ENCODE measurements at regions of chrX and their contacts with region 1.

Region 1: DNA sequence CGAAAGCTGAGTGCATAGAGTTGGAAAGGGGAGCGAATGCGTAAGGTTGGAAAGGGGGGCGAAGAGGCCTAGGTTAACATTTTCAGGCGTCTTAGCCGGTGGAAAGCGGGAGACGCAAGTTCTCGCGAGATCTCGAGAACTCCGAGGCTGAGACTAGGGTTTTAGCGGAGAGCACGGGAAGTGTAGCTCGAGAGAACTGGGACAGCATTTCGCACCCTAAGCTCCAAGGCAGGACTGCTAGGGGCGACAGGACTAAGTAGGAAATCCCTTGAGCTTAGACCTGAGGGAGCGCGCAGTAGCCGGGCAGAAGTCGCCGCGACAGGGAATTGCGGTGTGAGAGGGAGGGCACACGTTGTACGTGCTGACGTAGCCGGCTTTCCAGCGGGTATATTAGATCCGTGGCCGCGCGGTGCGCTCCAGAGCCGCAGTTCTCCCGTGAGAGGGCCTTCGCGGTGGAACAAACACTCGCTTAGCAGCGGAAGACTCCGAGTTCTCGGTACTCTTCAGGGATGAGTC is at the start of gene DDX3X:
- DNase-seq: peak; percentile 83 to 95 (median 94)
- H3K4me3 ChIP-seq: peak within 1 kb of the TSS; percentile 84 to 98
- H3K4me3 Mint-ChIP-seq: peak within 1 kb of the TSS; percentile 91 to 99 (median 98)
- H3K27ac ChIP-seq: peak within 1 kb of the TSS; percentile 98
- H3K27ac Mint-ChIP-seq: peak within 1 kb of the TSS; percentile 99 to 100 (median 100)
- H3K4me1 ChIP-seq: peaks cover 27% of the 10 kb centered on the region
- H3K4me1 Mint-ChIP-seq: peaks cover 11 to 65% (median 44%) of the 10 kb centered on the region in 4 donors
- H3K27me3 ChIP-seq: no peaks in the 10 kb centered on the region
- H3K27me3 Mint-ChIP-seq: no peaks in the 10 kb centered on the region
- total RNA-seq, gene DDX3X: 318 to 320 TPM

Region 2: GRCh38 chrX:40580537-40581335 is 753.1 kb before region 1 on chrX and contains the start of gene ATP6AP2:
- CTCF ChIA-PET with region 1: no interaction called
- POLR2A ChIA-PET with region 1: no interaction called
- intact Hi-C with region 1: loop called (anchors 10 kb)
- DNase-seq: peak; percentile 85 to 93 (median 90)
- H3K4me3 ChIP-seq: peak within 1 kb of the TSS; percentile 61 to 82
- H3K4me3 Mint-ChIP-seq: peak within 1 kb of the TSS; percentile 90 to 95 (median 92)
- H3K27ac ChIP-seq: peak within 1 kb of the TSS; percentile 84
- H3K27ac Mint-ChIP-seq: peak within 1 kb of the TSS; percentile 85 to 98 (median 96)
- H3K4me1 ChIP-seq: peaks cover 21% of the 10 kb centered on the region
- H3K4me1 Mint-ChIP-seq: peaks cover 15 to 35% (median 26%) of the 10 kb centered on the region in 4 donors
- H3K27me3 ChIP-seq: no peaks in the 10 kb centered on the region
- H3K27me3 Mint-ChIP-seq: no peaks in the 10 kb centered on the region
- total RNA-seq, gene ATP6AP2: 80.9 to 86.5 TPM

Region 3: DNA sequence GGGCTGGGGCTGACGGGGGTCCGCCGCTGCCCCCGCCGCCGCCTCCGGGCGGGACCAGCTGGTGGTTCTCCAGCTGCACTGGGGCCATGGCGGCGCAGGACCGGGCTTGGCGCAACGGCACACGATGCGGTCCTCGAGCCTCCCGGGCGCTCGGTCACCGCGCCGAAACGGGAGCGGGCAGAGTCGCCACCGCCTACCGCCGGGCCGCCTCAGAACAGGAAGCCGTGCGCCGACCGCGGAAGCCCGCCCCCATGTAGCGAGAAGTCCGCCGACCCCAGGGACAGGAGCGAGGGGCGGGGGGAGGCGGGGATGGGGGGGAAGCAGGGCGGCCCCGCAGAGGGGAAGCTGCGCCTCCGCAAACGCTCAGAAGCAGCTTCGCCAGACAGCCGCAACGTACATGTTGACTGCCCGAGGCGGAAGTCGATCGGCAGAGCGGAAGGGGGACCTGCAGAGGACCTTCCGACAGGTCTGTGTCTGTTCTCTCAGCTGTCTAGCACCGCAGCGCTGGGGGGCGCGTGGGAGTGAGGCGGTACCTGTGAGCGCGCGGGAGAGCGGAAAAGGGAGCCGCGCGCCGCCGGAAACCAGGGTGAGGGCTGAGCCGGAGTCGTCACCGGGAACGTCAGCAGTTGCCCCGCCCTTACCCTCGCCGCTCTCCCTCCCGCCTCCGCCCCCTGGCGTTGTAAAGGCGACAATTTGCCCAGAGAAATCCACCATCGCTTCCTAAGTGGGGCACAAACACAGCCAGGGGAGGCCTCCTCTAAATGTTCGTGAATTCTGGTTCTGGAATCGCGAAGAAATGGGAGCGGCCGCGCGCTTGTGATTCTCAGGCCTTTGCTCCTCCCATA is 598.3 kb before region 1 on chrX and contains the start of gene MED14:
- CTCF ChIA-PET with region 1: no interaction called
- POLR2A ChIA-PET with region 1: no interaction called
- intact Hi-C with region 1: loop called (anchors 2 kb)
- DNase-seq: peak; percentile 95 to 96 (median 96)
- H3K4me3 ChIP-seq: peak within 1 kb of the TSS; percentile 52 to 73
- H3K4me3 Mint-ChIP-seq: peak within 1 kb of the TSS; percentile 93 to 98 (median 97)
- H3K27ac ChIP-seq: peak within 1 kb of the TSS; percentile 94
- H3K27ac Mint-ChIP-seq: peak within 1 kb of the TSS; percentile 97 to 100 (median 99)
- H3K4me1 ChIP-seq: peaks cover 28% of the 10 kb centered on the region
- H3K4me1 Mint-ChIP-seq: peaks cover 23 to 76% (median 43%) of the 10 kb centered on the region in 4 donors
- H3K27me3 ChIP-seq: no peaks in the 10 kb centered on the region
- H3K27me3 Mint-ChIP-seq: no peaks in the 10 kb centered on the region
- total RNA-seq, gene MED14: 37.9 to 39.0 TPM

Region 4: DNA sequence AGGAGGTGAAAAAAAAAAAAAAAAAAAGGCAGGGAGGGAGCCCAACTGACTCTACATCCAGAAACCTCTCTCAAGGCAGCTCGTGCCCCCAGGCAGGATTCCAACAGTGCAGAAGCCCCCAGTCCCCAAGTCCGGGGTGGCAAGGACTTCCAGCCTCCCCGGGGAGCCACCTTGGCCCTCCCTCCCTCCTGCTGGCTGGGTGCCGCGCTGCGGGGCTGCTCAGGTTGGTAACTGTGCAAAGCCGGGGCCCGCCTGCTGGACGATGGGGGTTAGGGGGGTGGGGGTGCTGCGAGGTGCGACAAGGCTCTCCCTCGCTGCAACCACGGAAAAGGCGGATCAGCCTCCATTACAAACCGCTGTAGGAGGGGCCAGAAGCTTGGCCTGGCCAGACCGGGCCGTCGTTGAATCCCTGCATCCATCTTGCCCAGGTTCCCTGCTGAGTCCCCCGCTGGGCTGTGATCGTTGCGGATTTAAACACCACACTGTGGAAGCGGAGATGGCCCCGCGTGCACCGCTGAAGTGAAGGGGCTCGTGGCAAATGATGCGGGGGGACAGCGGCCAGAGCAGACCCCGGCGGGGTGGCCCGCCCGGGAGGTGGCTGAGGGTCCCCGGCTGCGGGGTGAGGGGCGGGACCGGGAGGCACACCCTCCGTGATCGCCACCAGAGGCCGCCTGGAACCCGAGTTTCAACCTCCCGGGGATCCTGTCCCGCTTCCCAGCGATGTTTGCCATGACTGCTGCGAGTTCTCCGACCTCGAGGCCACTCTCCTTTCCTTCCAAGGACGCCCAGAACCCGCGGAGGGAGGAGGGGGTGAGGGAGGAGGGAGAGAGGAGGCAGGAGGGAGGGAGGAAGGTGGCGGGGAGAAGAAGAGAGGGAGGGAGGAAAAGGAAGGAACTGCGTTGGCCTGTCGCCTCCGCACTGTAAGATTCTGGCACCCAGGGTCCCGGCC is 57.9 kb before region 1 on chrX:
- CTCF ChIA-PET with region 1: interaction called, 6 read pairs
- POLR2A ChIA-PET with region 1: interaction called, 5 read pairs
- intact Hi-C with region 1: loop called (anchors 1 kb)
- DNase-seq: peak; percentile 30 to 55 (median 47)
- H3K4me3 ChIP-seq: peak overlapping the region in 1 of 2 donors; percentile 38
- H3K4me3 Mint-ChIP-seq: peak overlapping the region; percentile 76 to 83 (median 82)
- H3K27ac ChIP-seq: no peak overlapping the region
- H3K27ac Mint-ChIP-seq: peak overlapping the region in 6 of 7 donors; percentile 36 to 72 (median 56)
- H3K4me1 ChIP-seq: peaks cover 5% of the 10 kb centered on the region
- H3K4me1 Mint-ChIP-seq: peaks cover 0 to 16% (median 2%) of the 10 kb centered on the region in 4 donors
- H3K27me3 ChIP-seq: no peaks in the 10 kb centered on the region
- H3K27me3 Mint-ChIP-seq: no peaks in the 10 kb centered on the region

Region 5: GRCh38 chrX:41293269-41293668 is 40.5 kb before region 1 on chrX:
- CTCF ChIA-PET with region 1: no interaction called
- POLR2A ChIA-PET with region 1: no interaction called
- intact Hi-C with region 1: no loop called
- DNase-seq: no peak
- H3K4me3 ChIP-seq: no peak overlapping the region
- H3K4me3 Mint-ChIP-seq: no peak overlapping the region
- H3K27ac ChIP-seq: no peak overlapping the region
- H3K27ac Mint-ChIP-seq: no peak overlapping the region
- H3K4me1 ChIP-seq: no peaks in the 10 kb centered on the region
- H3K4me1 Mint-ChIP-seq: no peaks in the 10 kb centered on the region
- H3K27me3 ChIP-seq: no peaks in the 10 kb centered on the region
- H3K27me3 Mint-ChIP-seq: no peaks in the 10 kb centered on the region

Region 6: GRCh38 chrX:41304178-41304577 is 29.6 kb before region 1 on chrX:
- CTCF ChIA-PET with region 1: no interaction called
- POLR2A ChIA-PET with region 1: no interaction called
- intact Hi-C with region 1: no loop called
- DNase-seq: no peak
- H3K4me3 ChIP-seq: no peak overlapping the region
- H3K4me3 Mint-ChIP-seq: no peak overlapping the region
- H3K27ac ChIP-seq: no peak overlapping the region
- H3K27ac Mint-ChIP-seq: no peak overlapping the region
- H3K4me1 ChIP-seq: no peaks in the 10 kb centered on the region
- H3K4me1 Mint-ChIP-seq: no peaks in the 10 kb centered on the region
- H3K27me3 ChIP-seq: no peaks in the 10 kb centered on the region
- H3K27me3 Mint-ChIP-seq: no peaks in the 10 kb centered on the region

Region 7: GRCh38 chrX:41350976-41351569 is 17.3 kb after region 1 on chrX:
- CTCF ChIA-PET with region 1: interaction called, 3 read pairs
- POLR2A ChIA-PET with region 1: interaction called, 16 read pairs
- intact Hi-C with region 1: loop called (anchors 1 kb)
- DNase-seq: peak in 1 of 5 donors; percentile 22
- H3K4me3 ChIP-seq: no peak overlapping the region
- H3K4me3 Mint-ChIP-seq: peak overlapping the region in 3 of 8 donors; percentile 24 to 44 (median 31)
- H3K27ac ChIP-seq: no peak overlapping the region
- H3K27ac Mint-ChIP-seq: peak overlapping the region; percentile 8 to 84 (median 47)
- H3K4me1 ChIP-seq: peaks cover 23% of the 10 kb centered on the region
- H3K4me1 Mint-ChIP-seq: peaks cover 23 to 52% (median 42%) of the 10 kb centered on the region in 4 donors
- H3K27me3 ChIP-seq: no peaks in the 10 kb centered on the region
- H3K27me3 Mint-ChIP-seq: no peaks in the 10 kb centered on the region

Region 8: DNA sequence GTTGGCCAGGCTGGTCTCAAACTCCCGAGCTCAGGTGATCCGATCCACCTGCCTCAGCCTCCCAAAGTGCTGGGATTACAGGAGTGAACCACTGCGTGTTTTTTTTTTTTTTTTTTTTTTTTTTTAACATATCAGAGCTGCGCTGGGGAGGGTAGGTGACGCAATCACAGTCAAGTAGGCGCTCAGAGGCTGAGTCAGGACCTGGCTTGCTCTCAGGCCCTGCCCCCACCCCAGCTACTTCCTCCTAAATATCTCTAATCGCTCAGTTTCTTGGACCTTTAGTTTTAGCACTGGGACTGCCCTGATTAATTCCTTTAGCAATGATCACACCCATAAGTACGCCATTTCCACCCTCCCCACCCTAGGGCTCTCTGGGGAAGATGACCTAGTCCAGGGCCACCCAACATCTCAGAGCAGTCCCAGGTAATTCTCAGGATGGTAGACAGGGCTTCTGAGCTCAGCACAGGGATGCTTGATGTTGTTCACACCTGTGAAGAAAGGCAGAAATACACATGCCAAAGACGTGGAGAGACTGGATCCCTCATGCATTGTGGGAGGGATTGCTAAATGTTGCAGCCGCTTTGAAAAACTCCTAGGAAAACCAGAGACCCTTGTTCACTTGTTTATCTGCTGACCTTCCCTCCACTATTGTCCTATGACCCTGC is 50.4 kb after region 1 on chrX:
- CTCF ChIA-PET with region 1: interaction called, 3 read pairs
- POLR2A ChIA-PET with region 1: interaction called, 33 read pairs
- intact Hi-C with region 1: loop called (anchors 1 kb)
- DNase-seq: peak; percentile 33 to 79 (median 53)
- H3K4me3 ChIP-seq: no peak overlapping the region
- H3K4me3 Mint-ChIP-seq: peak overlapping the region; percentile 53 to 92 (median 80)
- H3K27ac ChIP-seq: no peak overlapping the region
- H3K27ac Mint-ChIP-seq: peak overlapping the region; percentile 58 to 97 (median 94)
- H3K4me1 ChIP-seq: peaks cover 21% of the 10 kb centered on the region
- H3K4me1 Mint-ChIP-seq: peaks cover 12 to 21% (median 15%) of the 10 kb centered on the region in 4 donors
- H3K27me3 ChIP-seq: no peaks in the 10 kb centered on the region
- H3K27me3 Mint-ChIP-seq: no peaks in the 10 kb centered on the region

Region 9: GRCh38 chrX:41441934-41442823 is 108.4 kb after region 1 on chrX:
- CTCF ChIA-PET with region 1: interaction called, 6 read pairs
- POLR2A ChIA-PET with region 1: interaction called, 40 read pairs
- intact Hi-C with region 1: loop called (anchors 1 kb)
- DNase-seq: peak; percentile 85 to 93 (median 90)
- H3K4me3 ChIP-seq: peak overlapping the region in 1 of 2 donors; percentile 41
- H3K4me3 Mint-ChIP-seq: peak overlapping the region; percentile 54 to 75 (median 71)
- H3K27ac ChIP-seq: no peak overlapping the region
- H3K27ac Mint-ChIP-seq: peak overlapping the region; percentile 55 to 82 (median 79)
- H3K4me1 ChIP-seq: peaks cover 6% of the 10 kb centered on the region
- H3K4me1 Mint-ChIP-seq: peaks cover 4 to 15% (median 6%) of the 10 kb centered on the region in 4 donors
- H3K27me3 ChIP-seq: no peaks in the 10 kb centered on the region
- H3K27me3 Mint-ChIP-seq: no peaks in the 10 kb centered on the region

Measured in CD4-positive, alpha-beta memory T cell (primary cell).